ENCODE measurements at regions of chr15 and their contacts with region 1.

Region 1: GRCh38 chr15:85607842-85608241 is 186.9 kb downstream of the KLHL25 start:
- DNase-seq: no peak
- ATAC-seq: no peak
- H3K4me3 ChIP-seq: no peak overlapping the region
- H3K4me3 Mint-ChIP-seq: no peak overlapping the region
- H3K27ac ChIP-seq: no peak overlapping the region
- H3K27ac Mint-ChIP-seq: no peak overlapping the region
- H3K4me1 ChIP-seq: no peaks in the 10 kb centered on the region
- H3K4me1 Mint-ChIP-seq: peaks cover 35% of the 10 kb centered on the region
- H3K27me3 ChIP-seq: no peaks in the 10 kb centered on the region
- H3K27me3 Mint-ChIP-seq: no peaks in the 10 kb centered on the region
- CTCF ChIP-seq: no peak

Region 2: GRCh38 chr15:85589851-85590250 is 18.0 kb before region 1 on chr15:
- CTCF ChIA-PET with region 1: interaction called, 3 read pairs
- POLR2A ChIA-PET with region 1: no interaction called
- intact Hi-C with region 1: loop called in 1 of 2 experiments (anchors 1 kb)
- DNase-seq: no peak
- ATAC-seq: no peak
- H3K4me3 ChIP-seq: no peak overlapping the region
- H3K4me3 Mint-ChIP-seq: no peak overlapping the region
- H3K27ac ChIP-seq: no peak overlapping the region
- H3K27ac Mint-ChIP-seq: no peak overlapping the region
- H3K4me1 ChIP-seq: peaks cover 5% of the 10 kb centered on the region
- H3K4me1 Mint-ChIP-seq: peaks cover 34% of the 10 kb centered on the region
- H3K27me3 ChIP-seq: no peaks in the 10 kb centered on the region
- H3K27me3 Mint-ChIP-seq: no peaks in the 10 kb centered on the region
- CTCF ChIP-seq: no peak

Region 3: GRCh38 chr15:85646538-85647091 is 38.8 kb after region 1 on chr15:
- CTCF ChIA-PET with region 1: no interaction called
- POLR2A ChIA-PET with region 1: no interaction called
- intact Hi-C with region 1: loop called in 1 of 2 experiments (anchors 5 kb)
- DNase-seq: peak in 7 of 9 experiments; percentile 17 to 91 (median 54)
- ATAC-seq: peak; percentile 89
- H3K4me3 ChIP-seq: no peak overlapping the region
- H3K4me3 Mint-ChIP-seq: peak overlapping the region; percentile 40
- H3K27ac ChIP-seq: peak overlapping the region; percentile 5 to 72
- H3K27ac Mint-ChIP-seq: peak overlapping the region; percentile 79
- H3K4me1 ChIP-seq: peaks cover 22% of the 10 kb centered on the region
- H3K4me1 Mint-ChIP-seq: peaks cover 44% of the 10 kb centered on the region
- H3K27me3 ChIP-seq: no peaks in the 10 kb centered on the region
- H3K27me3 Mint-ChIP-seq: no peaks in the 10 kb centered on the region
- CTCF ChIP-seq: no peak